Dorsolateral prefrontal cortex (tissue), 120 donors: ENCODE measurements at regions of chr17 and their contacts with region 1.

Region 1: GRCh38 chr17:64920026-64920418 is 744 bp upstream of the LRRC37A3 start:
- DNase-seq: peak in 3 of 10 donors; percentile 26 to 42 (median 32)
- H3K4me3 ChIP-seq: peak overlapping the region; percentile 47 to 94 (median 75)
- H3K27ac ChIP-seq: peak overlapping the region in 58 of 59 donors; percentile 70 to 97 (median 93)
- H3K27me3 ChIP-seq: no peaks in the 10 kb centered on the region
- CTCF ChIP-seq: no peak

Region 2: GRCh38 chr17:64788286-64789060 is 131.5 kb before region 1 on chr17:
- intact Hi-C with region 1: no loop called
- DNase-seq: peak in 1 of 10 donors; percentile 25
- H3K4me3 ChIP-seq: no peak overlapping the region
- H3K27ac ChIP-seq: no peak overlapping the region
- H3K27me3 ChIP-seq: no peaks in the 10 kb centered on the region
- CTCF ChIP-seq: no peak

Region 3: DNA sequence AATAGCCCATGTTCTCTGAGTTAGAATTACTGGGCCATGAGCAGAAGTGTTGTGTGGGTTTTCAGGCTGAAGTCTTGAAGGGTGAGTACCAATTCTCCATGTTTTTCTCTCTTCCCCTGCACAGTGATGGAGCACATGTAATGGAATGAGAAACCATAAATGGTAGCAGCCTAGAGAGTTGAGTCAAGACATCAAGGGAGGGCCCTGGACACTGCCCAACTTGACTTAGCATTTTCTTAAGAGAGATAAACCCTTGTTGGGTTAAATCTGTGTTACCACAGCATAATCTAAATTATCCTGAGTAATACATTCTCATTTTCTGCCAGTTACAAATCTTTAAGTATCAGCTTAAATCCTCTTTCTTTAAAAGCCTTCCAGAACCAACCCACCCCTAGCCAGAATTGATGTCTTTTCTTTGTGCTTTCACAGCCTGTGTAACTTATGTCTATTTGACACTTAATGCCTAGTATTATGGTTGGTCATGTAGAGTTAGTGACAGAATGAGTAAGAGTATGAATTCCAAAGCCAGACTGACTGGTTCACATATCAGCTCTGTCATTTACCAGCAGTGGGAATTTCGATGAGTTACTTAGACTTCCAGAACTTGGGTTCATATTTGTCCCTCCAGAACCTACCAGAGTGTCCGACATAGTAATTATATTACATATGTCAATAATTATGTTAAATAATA is 190.1 kb after region 1 on chr17:
- intact Hi-C with region 1: loop called in 1 of 2 experiments (anchors 5 kb)
- DNase-seq: no peak
- H3K4me3 ChIP-seq: no peak overlapping the region
- H3K27ac ChIP-seq: no peak overlapping the region
- H3K27me3 ChIP-seq: no peaks in the 10 kb centered on the region
- CTCF ChIP-seq: no peak